ENCODE measurements at regions of chr7 and their contacts with region 1.

Region 1: DNA sequence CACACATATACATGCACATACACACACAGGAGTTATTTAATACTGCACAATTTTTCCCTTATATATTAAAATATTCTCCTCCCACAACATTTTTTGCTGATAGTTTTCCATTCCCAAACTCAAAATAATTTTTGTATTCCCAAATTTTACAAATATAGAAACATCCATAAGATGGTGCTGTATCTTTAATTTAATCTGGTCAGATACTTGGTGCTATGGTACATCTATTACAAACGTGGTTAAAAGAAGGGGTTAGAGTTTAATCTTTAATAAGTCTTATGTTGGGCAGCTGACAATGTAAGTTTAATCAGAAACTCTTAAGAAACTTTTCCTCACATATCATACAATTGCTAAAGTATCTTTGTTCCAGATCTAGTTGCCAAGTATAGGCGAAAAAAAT is 10.2 kb upstream of the CADPS2 start:
- DNase-seq: peak; percentile 26
- ATAC-seq: no peak
- H3K4me3 ChIP-seq: no peak overlapping the region
- H3K27ac ChIP-seq: no peak overlapping the region
- H3K4me1 ChIP-seq: peaks cover 9% of the 10 kb centered on the region
- H3K27me3 ChIP-seq: no peaks in the 10 kb centered on the region
- CTCF ChIP-seq: peak; percentile 48

Region 2: GRCh38 chr7:123054357-123055130 is 158.0 kb after region 1 on chr7:
- CTCF ChIA-PET with region 1: no interaction called
- POLR2A ChIA-PET with region 1: no interaction called
- intact Hi-C with region 1: loop called (anchors 2 kb)
- DNase-seq: peak; percentile 19
- ATAC-seq: peak; percentile 65
- H3K4me3 ChIP-seq: no peak overlapping the region
- H3K27ac ChIP-seq: no peak overlapping the region
- H3K4me1 ChIP-seq: no peaks in the 10 kb centered on the region
- H3K27me3 ChIP-seq: no peaks in the 10 kb centered on the region
- CTCF ChIP-seq: peak; percentile 42

Measured in PC-3 (cell line).